ENCODE measurements at regions of chr6 and their contacts with region 1.

Region 1: DNA sequence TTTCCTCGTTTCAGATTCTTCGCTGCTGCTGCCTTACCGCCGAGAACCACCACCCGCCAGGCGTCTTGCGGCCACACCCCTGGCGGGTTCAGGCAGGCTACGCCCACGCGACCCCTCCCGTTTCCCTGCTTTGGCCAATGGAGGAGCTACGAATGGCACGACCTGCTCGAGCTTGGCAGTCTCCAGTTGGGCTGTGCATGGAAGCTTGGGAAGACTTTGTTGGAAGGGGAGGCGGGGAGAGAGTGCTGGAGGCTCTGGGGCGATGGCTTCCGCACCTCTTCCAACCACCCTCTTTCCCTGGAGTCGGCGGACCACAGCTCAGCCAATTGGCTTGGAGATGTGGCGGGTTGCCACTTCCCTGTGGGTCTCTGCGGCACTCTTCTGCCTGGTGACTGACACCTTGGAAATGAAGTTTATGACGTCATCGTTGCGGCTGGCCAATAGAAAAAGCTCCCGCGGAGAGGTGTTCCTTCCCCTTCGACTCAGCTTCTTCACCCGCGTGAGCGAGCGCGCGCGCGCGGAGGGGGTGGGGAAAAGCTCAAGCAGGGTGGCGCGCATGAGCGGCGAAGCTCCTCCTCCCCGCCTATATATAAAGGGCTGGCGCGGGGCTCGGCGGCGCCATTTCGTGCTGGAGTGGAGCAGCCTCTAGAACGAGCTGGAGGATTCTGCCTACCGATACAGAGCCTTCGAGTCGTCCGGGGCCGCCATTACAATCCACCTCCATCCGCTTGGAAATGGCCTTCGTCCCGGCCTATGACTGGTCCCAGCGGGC is 3.4 kb downstream of the BRD2 start:
- DNase-seq: peak; percentile 99
- H3K4me3 ChIP-seq: peak overlapping the region; percentile 100
- H3K27ac ChIP-seq: peak overlapping the region; percentile 99
- H3K4me1 ChIP-seq: peaks cover 25% of the 10 kb centered on the region
- H3K27me3 ChIP-seq: no peaks in the 10 kb centered on the region
- CTCF ChIP-seq: no peak

Region 2: GRCh38 chr6:31822036-31822821 is 1149.5 kb before region 1 on chr6:
- CTCF ChIA-PET with region 1: no interaction called
- POLR2A ChIA-PET with region 1: interaction called, 10 read pairs
- intact Hi-C with region 1: loop called (anchors 10 kb)
- DNase-seq: peak; percentile 87 to 96
- H3K4me3 ChIP-seq: peak overlapping the region; percentile 81
- H3K27ac ChIP-seq: peak overlapping the region; percentile 98
- H3K4me1 ChIP-seq: peaks cover 72% of the 10 kb centered on the region
- H3K27me3 ChIP-seq: no peaks in the 10 kb centered on the region
- CTCF ChIP-seq: no peak

Region 3: DNA sequence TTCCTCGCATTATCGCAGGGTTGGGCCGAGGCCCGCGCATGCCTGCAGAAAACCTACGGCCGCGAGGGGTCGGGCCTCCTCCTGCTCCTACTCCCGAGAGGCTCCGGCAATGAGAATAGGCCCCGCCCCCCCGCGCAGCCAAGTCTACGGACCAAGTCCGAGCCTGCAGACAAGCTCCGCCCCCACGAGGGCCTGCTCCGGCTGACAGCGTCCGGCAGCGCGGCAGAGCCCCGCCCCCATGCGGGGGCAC is 776.2 kb before region 1 on chr6:
- CTCF ChIA-PET with region 1: no interaction called
- POLR2A ChIA-PET with region 1: interaction called, 10 read pairs
- intact Hi-C with region 1: loop called (anchors 10 kb)
- DNase-seq: peak; percentile 98 to 100
- H3K4me3 ChIP-seq: peak overlapping the region; percentile 96; the same call in 1 of the 2 replicates
- H3K27ac ChIP-seq: no peak overlapping the region
- H3K4me1 ChIP-seq: peaks cover 18% of the 10 kb centered on the region
- H3K27me3 ChIP-seq: peaks cover 4% of the 10 kb centered on the region
- CTCF ChIP-seq: no peak; the same call in none of the 2 replicates

Region 4: GRCh38 chr6:32853541-32854375 is 118.0 kb before region 1 on chr6 and contains the starts of genes PSMB9 and TAP1:
- CTCF ChIA-PET with region 1: interaction called, 12 read pairs
- POLR2A ChIA-PET with region 1: interaction called, 3 read pairs
- intact Hi-C with region 1: no loop called
- DNase-seq: peak; percentile 77 to 90
- H3K4me3 ChIP-seq: peak within 1 kb of the TSS; percentile 87
- H3K27ac ChIP-seq: peak within 1 kb of the TSS; percentile 12; the same call in 1 of the 2 replicates
- H3K4me1 ChIP-seq: peaks cover 8% of the 10 kb centered on the region
- H3K27me3 ChIP-seq: no peaks in the 10 kb centered on the region
- CTCF ChIP-seq: peak; percentile 67
- total RNA-seq, gene PSMB9: 37.6 and 48.4 TPM in 2 replicates
- total RNA-seq, gene TAP1: 23.1 and 23.4 TPM in 2 replicates

Region 5: GRCh38 chr6:32952817-32953739 is 18.7 kb before region 1 on chr6 and contains the start of gene HLA-DMA:
- CTCF ChIA-PET with region 1: interaction called, 7 read pairs
- POLR2A ChIA-PET with region 1: interaction called, 37 read pairs
- intact Hi-C with region 1: loop called (anchors 1 kb)
- DNase-seq: peak; percentile 88 to 94
- H3K4me3 ChIP-seq: no peak within 1 kb of the TSS
- H3K27ac ChIP-seq: no peak within 1 kb of the TSS
- H3K4me1 ChIP-seq: peaks cover 4% of the 10 kb centered on the region
- H3K27me3 ChIP-seq: no peaks in the 10 kb centered on the region
- CTCF ChIP-seq: peak; percentile 81
- total RNA-seq, gene HLA-DMA: 18.3 and 22.1 TPM in 2 replicates

Region 6: GRCh38 chr6:33317669-33318425 is 346.1 kb after region 1 on chr6 and contains the start of gene ZBTB22:
- CTCF ChIA-PET with region 1: no interaction called
- POLR2A ChIA-PET with region 1: no interaction called
- intact Hi-C with region 1: loop called (anchors 5 kb)
- DNase-seq: peak; percentile 97 to 98
- H3K4me3 ChIP-seq: peak within 1 kb of the TSS; percentile 49
- H3K27ac ChIP-seq: peak within 1 kb of the TSS; percentile 66
- H3K4me1 ChIP-seq: peaks cover 51% of the 10 kb centered on the region
- H3K27me3 ChIP-seq: no peaks in the 10 kb centered on the region
- CTCF ChIP-seq: no peak
- total RNA-seq, gene ZBTB22: 16.5 and 20.8 TPM in 2 replicates